ENCODE measurements at regions of chr4 and their contacts with region 1.

Region 1: DNA sequence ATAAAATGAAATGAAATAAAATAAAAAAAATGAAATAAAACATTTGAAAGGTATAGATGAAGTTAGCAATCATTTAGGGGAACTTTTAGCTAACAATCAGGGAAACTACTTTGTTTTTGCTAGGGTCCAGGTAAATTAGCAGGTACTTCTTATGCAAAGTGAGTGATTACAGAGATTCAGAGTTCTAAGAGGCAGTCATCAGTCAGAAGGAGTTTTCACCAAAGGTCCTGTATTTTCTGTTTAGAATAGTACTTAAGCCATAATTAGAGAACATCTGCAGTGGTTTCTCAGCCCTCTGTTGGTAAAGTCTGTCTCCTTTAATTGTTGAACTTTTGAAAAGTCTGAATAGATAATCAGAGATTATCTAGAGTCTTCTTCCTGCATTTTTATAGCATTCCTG is 50.6 kb downstream of the STIM2 start:
- DNase-seq: no peak
- ATAC-seq: no peak
- H3K4me3 ChIP-seq: no peak overlapping the region
- H3K4me3 Mint-ChIP-seq: no peak overlapping the region
- H3K27ac ChIP-seq: no peak overlapping the region
- H3K27ac Mint-ChIP-seq: no peak overlapping the region
- H3K4me1 ChIP-seq: peaks cover 18 to 37% of the 10 kb centered on the region in 2 donors
- H3K4me1 Mint-ChIP-seq: peaks cover 71% of the 10 kb centered on the region
- H3K27me3 ChIP-seq: no peaks in the 10 kb centered on the region
- H3K27me3 Mint-ChIP-seq: no peaks in the 10 kb centered on the region
- CTCF ChIP-seq: no peak

Region 2: DNA sequence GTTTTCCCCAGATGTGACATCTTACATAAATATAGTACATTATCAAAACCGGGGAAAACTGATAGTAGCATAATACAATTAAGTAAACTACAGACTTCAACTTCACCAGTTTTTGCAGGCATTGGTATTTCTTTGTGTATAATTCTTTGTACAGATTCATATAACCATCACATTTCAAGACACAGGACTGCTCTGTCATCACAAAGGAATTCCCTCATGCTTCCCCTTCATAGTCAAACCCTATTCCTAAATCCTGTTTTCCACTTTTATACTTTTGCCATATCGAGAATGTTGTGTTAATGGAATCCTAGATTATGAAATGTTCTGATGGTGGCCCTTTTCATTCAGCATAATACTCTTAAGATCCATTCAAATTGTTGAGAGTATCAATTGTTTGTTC is 14.6 kb before region 1 on chr4:
- CTCF ChIA-PET with region 1: no interaction called
- POLR2A ChIA-PET with region 1: no interaction called
- intact Hi-C with region 1: loop called (anchors 2 kb)
- DNase-seq: no peak
- ATAC-seq: no peak
- H3K4me3 ChIP-seq: no peak overlapping the region
- H3K4me3 Mint-ChIP-seq: no peak overlapping the region
- H3K27ac ChIP-seq: no peak overlapping the region
- H3K27ac Mint-ChIP-seq: no peak overlapping the region
- H3K4me1 ChIP-seq: peaks cover 21 to 37% of the 10 kb centered on the region in 2 donors
- H3K4me1 Mint-ChIP-seq: peaks cover 68% of the 10 kb centered on the region
- H3K27me3 ChIP-seq: no peaks in the 10 kb centered on the region
- H3K27me3 Mint-ChIP-seq: no peaks in the 10 kb centered on the region
- CTCF ChIP-seq: no peak

Measured in B cell (primary cell).